ENCODE measurements at regions of chr6 and their contacts with region 1.

Region 1: DNA sequence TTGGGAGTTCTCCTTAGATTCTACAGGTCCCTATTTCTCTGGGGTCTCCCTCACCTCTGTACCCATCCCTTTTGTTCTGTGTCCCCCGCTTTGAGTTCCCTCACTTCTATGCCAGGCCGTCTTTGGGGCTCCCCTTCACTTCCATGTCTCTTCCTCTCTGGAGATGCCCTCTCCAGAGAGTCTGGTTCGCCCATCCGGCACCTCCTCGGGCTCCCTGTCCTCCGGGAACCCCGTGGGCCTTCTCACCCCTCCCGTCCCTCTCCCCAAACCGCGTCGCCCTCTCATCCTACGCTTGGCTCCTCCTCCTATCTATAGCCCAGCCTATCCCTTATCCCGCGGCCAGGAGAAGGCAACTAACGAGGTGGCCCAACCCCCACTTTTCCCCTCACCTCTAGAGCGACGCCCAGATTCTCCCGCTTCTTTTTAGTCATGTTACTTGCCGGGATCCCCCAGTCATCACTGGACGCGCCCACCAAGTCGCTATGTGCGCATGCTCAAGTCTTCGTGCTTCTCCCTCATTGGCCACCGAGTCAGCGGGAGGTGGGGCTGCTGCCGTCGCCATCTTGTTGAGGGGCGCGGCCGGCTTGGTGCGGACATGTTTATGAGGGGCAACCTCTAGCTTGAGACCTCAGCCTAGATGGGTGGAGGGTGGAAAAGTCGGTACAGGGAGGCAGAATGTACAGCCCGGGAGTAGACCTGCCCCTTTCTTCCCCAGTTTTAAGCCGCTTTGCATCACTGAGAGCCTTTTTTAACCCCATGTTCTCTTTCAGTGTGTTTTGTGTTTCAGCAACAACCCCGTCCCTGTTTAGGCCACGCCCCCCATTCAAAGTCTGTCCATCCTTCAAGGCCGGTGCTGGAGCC is at the start of gene CCDC167:
- DNase-seq: peak; percentile 94
- CTCF ChIP-seq: no peak

Region 2: DNA sequence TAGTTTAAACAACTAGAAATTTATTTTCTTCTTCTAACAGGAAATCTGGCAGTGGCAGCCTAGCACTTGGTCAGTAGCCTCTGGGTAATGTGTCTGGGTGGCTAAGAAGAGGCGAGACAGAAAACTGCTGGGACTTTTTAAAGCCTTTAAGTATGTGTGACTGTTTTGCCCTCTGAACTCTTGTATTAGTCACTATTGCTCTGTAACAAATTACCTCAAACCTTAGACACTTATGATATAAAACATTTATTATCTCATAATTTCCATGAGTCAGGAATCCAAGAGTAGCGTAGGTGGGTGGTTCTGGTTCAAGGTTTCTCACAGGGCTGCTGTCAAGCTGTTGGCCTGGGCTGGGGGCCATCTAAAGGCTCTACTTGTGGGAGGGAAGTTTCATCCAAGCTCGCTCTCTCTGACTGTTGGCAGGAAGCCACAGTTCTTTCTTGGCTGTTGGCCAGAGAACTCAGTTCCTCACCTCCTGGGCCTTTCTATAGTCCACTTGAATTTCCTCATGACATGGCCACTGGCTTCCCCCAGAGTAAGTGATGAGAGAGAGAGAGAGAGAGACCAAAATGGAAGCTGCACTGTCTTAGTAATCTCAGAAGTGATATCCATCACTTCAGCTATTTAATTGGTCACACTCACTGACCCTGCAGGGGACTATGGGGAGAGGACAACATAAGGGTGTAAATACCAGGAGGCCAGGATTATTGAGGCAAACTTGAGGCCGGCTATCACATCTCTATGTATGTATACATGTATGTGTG is 259.5 kb before region 1 on chr6:
- in situ Hi-C with region 1: no loop called
- DNase-seq: peak; percentile 68
- CTCF ChIP-seq: no peak

Region 3: GRCh38 chr6:37691904-37692806 is 192.5 kb after region 1 on chr6:
- in situ Hi-C with region 1: loop called (anchors 25 kb)
- DNase-seq: peak; percentile 88
- CTCF ChIP-seq: peak; percentile 99

Measured in GM13976 (cell line).